GM10248 (cell line): ENCODE measurements at regions of chr7 and their contacts with region 1.

Region 1: DNA sequence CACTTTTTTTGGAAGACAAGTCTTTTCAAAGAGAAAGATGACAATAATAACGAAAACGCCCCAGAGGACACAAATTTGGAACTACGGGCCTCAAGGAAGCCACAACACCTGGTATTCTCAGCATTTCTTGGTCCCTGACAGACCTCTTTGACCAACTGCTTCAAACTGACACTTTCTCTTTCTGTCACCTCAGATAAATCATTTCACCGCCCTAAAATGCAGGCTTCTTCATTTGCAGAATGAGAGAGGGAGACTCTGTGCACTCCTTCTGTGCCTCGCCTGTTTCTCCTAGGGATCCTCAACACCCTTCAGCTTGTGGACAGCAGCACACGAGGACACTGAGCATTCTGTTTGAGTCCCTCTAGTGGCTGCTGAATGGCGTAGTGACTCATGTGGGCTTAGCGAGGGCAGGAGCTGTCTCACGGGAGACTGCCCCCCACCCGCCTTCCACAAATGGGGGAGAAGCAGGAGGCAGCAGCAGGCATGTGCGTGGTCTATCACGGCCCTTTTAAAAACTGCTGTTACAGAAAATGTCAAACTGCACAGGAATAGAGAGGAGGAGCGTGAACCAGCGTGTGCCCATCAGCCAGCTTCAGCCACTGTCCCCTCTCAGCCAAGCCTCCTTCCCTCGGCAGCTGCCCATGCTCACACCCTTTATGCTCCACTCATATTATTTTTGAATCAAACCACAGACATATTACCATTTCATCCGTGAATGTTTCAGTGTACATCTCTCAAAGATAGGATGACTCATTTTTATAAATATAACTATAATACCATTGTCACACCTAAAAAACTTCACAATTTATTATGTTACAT is 41.4 kb downstream of the GSDME start:
- DNase-seq: peak; percentile 68
- CTCF ChIP-seq: peak; percentile 67

Region 2: DNA sequence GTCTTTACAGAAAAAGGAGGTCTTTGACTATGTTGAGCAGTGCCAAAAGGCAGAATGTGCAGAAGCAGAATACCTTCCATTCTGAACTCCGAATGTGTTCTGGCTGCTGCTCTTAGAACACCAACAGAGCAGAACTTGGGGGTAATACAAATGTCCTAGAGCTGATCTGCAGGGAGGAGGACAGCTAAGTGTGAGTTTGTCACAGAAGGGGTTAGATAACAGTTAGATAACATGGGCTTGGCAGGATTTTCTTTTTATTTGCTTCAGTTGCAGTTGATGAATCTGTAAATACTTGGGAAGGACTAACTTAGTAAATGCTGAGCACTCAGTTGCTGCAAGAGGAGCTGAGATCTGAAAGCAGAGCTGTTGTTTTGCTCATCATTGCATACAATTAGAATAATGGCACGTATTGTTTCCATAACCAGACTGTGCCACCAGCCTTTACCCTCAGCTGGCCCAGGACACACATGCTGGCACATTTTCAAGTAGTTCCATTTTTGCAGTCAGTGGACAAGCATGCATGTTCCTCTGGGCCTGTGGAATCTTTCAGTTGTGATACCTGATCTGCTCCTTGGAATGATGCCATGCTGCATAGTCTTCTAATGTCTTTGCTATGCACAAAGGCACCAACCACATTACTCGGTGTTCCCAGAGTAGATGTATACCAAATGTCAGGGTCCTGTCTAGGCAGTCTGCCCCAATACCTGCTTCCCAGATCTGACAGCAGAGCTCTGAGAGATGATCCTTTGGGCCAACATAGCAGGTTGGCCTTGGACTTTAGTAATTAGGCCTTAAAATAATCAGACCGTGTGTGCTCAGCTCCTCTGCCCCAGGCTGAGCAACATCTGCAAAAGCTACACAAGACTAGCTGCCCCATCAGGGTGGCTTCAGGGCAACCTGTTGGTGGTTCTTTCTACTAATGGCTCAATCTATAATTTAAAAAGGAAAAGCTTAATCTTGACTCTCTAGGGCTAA is 14.3 kb before region 1 on chr7:
- CTCF ChIA-PET with region 1: interaction called, 41 read pairs
- POLR2A ChIA-PET with region 1: no interaction called
- DNase-seq: no peak
- CTCF ChIP-seq: no peak

Region 3: DNA sequence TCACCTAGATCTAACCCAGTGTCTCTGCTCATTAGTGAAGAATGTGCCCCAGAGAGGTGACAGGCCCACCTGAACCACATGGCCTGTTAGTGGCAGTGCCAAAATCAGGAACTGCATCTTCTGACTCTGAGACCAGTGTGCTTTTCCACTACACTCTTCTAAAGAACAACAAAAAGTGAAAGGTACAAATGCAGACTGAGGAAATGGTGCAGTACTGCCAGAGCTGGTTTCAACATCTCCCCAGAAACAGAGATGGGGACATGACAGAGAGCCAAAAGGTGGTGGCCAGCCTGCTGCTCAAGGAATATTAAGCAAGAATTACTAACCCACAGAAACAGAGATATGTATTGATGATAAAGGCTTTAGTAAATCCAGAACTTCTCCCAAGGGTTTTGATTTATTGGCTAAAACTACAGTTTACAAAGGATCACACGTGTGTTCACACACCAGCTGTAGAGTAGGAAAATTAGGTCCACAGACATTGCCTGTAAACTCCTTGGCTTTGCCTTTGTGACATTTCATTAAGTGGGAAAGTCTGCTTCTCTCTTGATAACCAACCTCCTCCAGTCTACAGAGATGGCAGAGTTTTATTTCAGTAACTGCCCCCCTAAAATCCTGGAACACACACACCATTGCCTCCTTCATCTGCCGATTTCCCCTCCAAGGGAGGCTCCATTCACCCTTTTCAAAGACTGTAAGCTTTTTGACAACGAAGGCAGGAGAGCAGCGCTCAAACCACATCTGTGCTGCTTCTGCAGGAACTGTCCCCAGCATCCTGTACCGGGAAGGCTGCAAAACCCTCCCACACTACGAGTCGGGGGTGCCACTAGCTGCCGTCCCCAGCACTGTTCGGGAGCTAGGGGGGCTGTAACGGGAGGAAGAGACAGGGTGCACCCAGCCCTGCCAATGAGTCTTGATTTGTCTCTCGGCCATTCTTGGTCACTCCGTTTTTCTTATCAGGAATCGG is 11.6 kb after region 1 on chr7:
- CTCF ChIA-PET with region 1: interaction called, 11 read pairs
- POLR2A ChIA-PET with region 1: no interaction called
- DNase-seq: peak; percentile 70
- CTCF ChIP-seq: no peak

Region 4: GRCh38 chr7:24741691-24742504 is 26.0 kb after region 1 on chr7:
- CTCF ChIA-PET with region 1: no interaction called
- POLR2A ChIA-PET with region 1: no interaction called
- DNase-seq: no peak
- CTCF ChIP-seq: no peak